PC-3 (cell line): ENCODE measurements at regions of chr6 and their contacts with region 1.

Region 1: GRCh38 chr6:159726918-159727716 is at the start of gene WTAP:
- DNase-seq: peak; percentile 87
- ATAC-seq: peak; percentile 81
- H3K4me3 ChIP-seq: peak within 1 kb of the TSS; percentile 99
- H3K27ac ChIP-seq: peak within 1 kb of the TSS; percentile 96
- H3K4me1 ChIP-seq: peaks cover 16% of the 10 kb centered on the region
- H3K27me3 ChIP-seq: no peaks in the 10 kb centered on the region
- CTCF ChIP-seq: no peak
- total RNA-seq, gene WTAP: 50.8 and 54.5 TPM in 2 replicates

Region 2: DNA sequence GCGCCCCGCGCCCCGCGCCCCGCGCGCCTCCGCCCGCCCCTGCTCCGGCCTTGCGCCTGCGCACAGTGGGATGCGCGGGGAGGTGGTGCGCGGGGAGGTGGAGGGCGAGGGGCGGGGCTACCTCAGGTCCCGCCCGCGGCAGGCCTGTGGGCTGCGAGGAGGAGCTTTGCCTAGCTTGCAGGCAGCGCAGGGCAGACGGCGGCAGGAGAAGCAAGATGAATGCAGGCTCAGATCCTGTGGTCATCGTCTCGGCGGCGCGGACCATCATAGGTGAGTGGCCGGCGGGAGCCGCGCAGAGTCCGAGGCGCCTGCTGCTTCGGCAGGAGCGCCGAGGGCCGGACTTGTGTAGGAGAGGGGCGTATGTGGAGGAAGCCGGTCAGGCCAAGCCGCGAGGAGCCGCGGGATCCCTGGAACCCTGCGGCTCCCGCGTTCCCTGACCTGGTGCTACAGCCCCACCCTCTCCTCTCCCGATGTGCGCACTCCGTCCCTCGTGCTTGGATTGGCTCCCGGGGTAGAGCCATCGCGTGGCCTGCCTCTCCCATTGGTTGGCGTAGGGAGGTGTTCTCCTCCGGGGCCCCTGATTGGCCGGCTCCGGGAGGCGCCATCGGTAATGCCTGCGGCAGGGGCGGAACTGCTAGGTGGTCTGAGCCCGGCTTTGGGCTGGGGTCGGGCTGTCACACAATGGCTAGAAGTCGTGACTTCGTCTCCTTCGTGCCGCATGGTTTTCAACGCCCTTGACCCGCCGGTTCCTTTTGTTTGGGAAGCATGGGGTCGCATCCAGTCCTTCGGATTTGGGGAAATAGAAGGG is 35.0 kb after region 1 on chr6 and contains the start of gene ACAT2:
- CTCF ChIA-PET with region 1: no interaction called
- POLR2A ChIA-PET with region 1: no interaction called
- intact Hi-C with region 1: loop called (anchors 2 kb)
- DNase-seq: peak; percentile 92
- ATAC-seq: peak; percentile 92
- H3K4me3 ChIP-seq: peak within 1 kb of the TSS; percentile 87
- H3K27ac ChIP-seq: peak within 1 kb of the TSS; percentile 95
- H3K4me1 ChIP-seq: peaks cover 21% of the 10 kb centered on the region
- H3K27me3 ChIP-seq: no peaks in the 10 kb centered on the region
- CTCF ChIP-seq: no peak
- total RNA-seq, gene ACAT2: 29.0 and 36.0 TPM in 2 replicates